ENCODE measurements at regions of chr16 and their contacts with region 1.

Region 1: DNA sequence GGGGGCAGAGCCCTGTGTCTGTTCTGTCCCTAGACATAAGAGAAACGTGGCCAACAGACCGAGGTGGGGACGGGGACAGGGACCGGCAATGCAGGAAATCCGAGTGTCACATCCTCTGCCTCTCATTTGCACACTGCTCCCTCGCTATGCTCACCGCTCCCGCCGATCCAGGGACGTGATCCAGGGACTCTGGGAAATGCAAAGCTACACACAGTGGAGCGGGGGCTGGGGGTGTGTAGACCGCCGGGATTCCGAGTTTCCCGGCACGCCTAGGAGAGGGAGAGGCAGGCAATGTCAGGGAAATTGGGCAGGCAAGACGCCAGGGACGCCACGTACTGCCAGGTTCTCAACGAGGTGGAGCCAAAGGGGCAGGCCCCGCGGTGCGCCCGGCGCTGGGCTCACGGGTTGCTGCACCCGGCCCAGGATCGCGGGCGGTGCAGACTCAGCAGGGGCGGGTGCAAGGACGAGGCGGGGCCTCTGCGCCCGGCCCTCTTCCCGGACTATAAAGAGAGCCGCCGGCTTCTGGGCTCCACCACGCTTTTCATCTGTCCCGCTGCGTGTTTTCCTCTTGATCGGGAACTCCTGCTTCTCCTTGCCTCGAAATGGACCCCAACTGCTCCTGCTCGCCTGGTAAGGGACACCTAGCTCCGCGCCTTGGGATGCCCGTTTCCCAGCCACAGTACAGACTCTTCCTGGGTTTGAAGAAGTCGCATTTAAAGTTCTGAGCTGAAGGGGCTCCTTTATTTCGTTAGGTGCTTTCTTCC is at the start of gene MT1X:
- DNase-seq: peak; percentile 82 to 94
- ATAC-seq: peak; percentile 98 to 99 (median 99)
- H3K4me3 ChIP-seq: peak within 1 kb of the TSS; percentile 52
- H3K4me3 Mint-ChIP-seq: peak within 1 kb of the TSS; percentile 94
- H3K27ac ChIP-seq: peak within 1 kb of the TSS; percentile 48
- H3K27ac Mint-ChIP-seq: peak within 1 kb of the TSS; percentile 64 to 88
- H3K4me1 ChIP-seq: peaks cover 20% of the 10 kb centered on the region
- H3K4me1 Mint-ChIP-seq: peaks cover 9 to 17% of the 10 kb centered on the region in 2 donors
- H3K27me3 ChIP-seq: no peaks in the 10 kb centered on the region
- H3K27me3 Mint-ChIP-seq: no peaks in the 10 kb centered on the region
- CTCF ChIP-seq: no peak
- total RNA-seq, gene MT1X: 17.6 to 23.1 (median 20.0) TPM

Region 2: GRCh38 chr16:56450986-56451752 is 231.0 kb before region 1 on chr16 and contains the starts of genes NUDT21 and OGFOD1:
- intact Hi-C with region 1: loop called (anchors 1 kb)
- DNase-seq: peak; percentile 79 to 97
- ATAC-seq: peak; percentile 98 to 100 (median 98)
- H3K4me3 ChIP-seq: peak within 1 kb of the TSS; percentile 95
- H3K4me3 Mint-ChIP-seq: peak within 1 kb of the TSS; percentile 96
- H3K27ac ChIP-seq: peak within 1 kb of the TSS; percentile 70
- H3K27ac Mint-ChIP-seq: peak within 1 kb of the TSS; percentile 89 to 90
- H3K4me1 ChIP-seq: peaks cover 20% of the 10 kb centered on the region
- H3K4me1 Mint-ChIP-seq: peaks cover 51 to 52% of the 10 kb centered on the region in 2 donors
- H3K27me3 ChIP-seq: no peaks in the 10 kb centered on the region
- H3K27me3 Mint-ChIP-seq: no peaks in the 10 kb centered on the region
- CTCF ChIP-seq: no peak
- total RNA-seq, gene NUDT21: 78.1 to 108 (median 90.0) TPM
- total RNA-seq, gene OGFOD1: 12.7 to 20.6 (median 13.1) TPM

Region 3: DNA sequence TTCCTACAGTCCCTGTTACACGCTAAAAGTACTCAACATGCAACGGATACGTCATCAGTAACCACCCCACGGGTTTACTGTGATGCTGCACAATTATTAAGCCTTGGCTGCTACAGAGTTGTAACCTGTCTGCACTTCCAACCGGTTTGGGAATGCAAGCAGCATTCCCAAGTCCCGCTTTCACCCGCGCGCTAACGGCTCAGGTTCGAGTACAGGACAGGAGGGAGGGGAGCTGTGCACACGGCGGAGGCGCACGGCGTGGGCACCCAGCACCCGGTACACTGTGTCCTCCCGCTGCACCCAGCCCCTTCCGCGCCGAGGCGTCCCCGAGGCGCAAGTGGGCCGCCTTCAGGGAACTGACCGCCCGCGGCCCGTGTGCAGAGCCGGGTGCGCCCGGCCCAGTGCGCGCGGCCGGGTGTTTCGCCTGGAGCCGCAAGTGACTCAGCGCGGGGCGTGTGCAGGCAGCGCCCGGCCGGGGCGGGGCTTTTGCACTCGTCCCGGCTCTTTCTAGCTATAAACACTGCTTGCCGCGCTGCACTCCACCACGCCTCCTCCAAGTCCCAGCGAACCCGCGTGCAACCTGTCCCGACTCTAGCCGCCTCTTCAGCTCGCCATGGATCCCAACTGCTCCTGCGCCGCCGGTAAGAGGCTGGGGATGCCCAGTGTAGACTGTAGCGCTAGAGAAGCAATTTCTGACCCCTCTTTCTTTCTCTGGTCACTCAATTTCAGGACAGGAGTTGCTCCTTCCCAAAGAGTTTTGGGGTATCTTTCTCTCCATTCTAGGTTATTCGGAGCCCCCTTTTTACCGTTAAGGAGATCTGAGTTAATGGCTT is 73.9 kb before region 1 on chr16 and contains the start of gene MT2A:
- intact Hi-C with region 1: loop called (anchors 1 kb)
- DNase-seq: peak; percentile 82 to 94
- ATAC-seq: peak; percentile 87 to 92 (median 90)
- H3K4me3 ChIP-seq: peak within 1 kb of the TSS; percentile 59
- H3K4me3 Mint-ChIP-seq: peak within 1 kb of the TSS; percentile 95
- H3K27ac ChIP-seq: peak within 1 kb of the TSS; percentile 87
- H3K27ac Mint-ChIP-seq: peak within 1 kb of the TSS; percentile 89 to 96
- H3K4me1 ChIP-seq: peaks cover 47% of the 10 kb centered on the region
- H3K4me1 Mint-ChIP-seq: peaks cover 50 to 51% of the 10 kb centered on the region in 2 donors
- H3K27me3 ChIP-seq: no peaks in the 10 kb centered on the region
- H3K27me3 Mint-ChIP-seq: no peaks in the 10 kb centered on the region
- CTCF ChIP-seq: no peak
- total RNA-seq, gene MT2A: 33.0 to 81.5 (median 70.6) TPM

Measured in natural killer cell (primary cell).